Activated T-helper 2 cell treated with anti-CD3 and anti-CD28 coated beads, Interferon-gamma antibody, Interleukin-2, Interleukin-4, amounts not matched to agents 10 μg/mL and 5 μg/mL and 100 μg/mL, durations not matched to agents 14 hours and 24 hours and 36 hours (primary cell): ENCODE measurements at regions of chr2 and their contacts with region 1.

Region 1: DNA sequence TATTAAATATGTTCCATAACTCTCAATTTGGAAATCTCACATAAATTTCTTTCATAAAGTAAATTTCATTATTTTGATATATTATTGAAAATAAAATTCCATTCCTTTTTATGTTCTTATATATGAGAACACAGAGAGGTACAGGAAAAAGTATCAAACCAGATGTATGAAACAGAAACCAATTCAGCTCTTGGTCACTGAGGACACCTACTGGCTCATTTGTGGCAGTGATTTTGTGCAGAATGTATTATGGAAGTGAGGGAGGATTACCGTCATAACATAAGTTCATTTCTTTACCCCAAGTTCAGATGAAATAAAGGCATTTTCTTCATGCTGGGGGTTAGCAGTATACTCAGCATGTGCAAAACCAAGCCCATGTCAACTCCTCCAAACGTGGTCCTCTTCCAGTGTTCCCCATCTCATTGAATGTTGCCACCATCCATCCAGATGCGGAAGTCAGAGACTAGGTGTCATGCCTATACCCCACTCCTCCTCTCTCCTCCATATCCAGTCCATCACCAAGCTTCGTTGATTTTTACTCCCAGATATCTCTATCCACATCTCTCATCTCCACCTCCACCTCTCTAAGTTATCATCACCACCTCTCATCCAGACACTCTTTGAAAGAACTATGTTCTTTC is 41.7 kb upstream of the MALL start:
- DNase-seq: no peak
- H3K4me3 Mint-ChIP-seq: no peak overlapping the region
- H3K27ac Mint-ChIP-seq: no peak overlapping the region
- H3K4me1 Mint-ChIP-seq: peaks cover 29% of the 10 kb centered on the region
- H3K27me3 Mint-ChIP-seq: peaks cover 18% of the 10 kb centered on the region

Region 2: DNA sequence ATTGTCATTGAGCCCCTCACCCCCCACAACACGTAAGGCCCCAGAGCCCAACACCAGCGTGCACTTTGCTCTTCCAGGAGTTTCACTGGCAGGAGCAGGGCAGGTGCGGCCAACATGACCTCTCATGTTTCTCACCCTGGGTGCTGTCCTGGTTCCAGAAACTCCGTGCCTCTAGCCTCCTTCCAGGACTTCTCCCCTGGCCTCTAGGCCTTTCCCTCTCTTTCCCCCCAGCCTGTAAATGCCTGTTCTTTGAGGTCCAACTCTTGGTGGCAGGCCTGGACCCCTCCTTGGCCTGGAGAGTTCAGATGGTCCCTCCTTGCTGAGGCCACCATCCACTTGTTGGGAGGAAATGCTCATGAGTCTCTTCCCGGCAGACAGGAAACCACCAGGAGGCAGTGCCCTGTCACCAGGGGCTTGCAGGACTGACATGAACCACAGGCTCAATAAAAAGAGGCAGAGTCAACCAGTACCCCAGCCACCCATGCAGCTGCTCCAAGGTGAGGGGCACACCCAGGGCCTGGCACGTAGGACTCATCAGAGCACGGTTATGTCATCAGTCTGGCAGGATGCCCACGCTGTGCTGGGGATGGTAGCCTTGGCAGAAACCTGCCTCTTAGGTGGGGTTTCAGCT is 43.2 kb before region 1 on chr2:
- intact Hi-C with region 1: loop called (anchors 1 kb)
- DNase-seq: no peak
- H3K4me3 Mint-ChIP-seq: peak overlapping the region; percentile 32
- H3K27ac Mint-ChIP-seq: no peak overlapping the region
- H3K4me1 Mint-ChIP-seq: peaks cover 19% of the 10 kb centered on the region
- H3K27me3 Mint-ChIP-seq: peaks cover 58% of the 10 kb centered on the region